CD8-positive, alpha-beta T cell (primary cell): ENCODE measurements at regions of chr1 and their contacts with region 1.

Region 1: GRCh38 chr1:121558514-121558913 is 373.7 kb downstream of the SRGAP2C start:
- DNase-seq: no peak
- ATAC-seq: no peak
- H3K4me3 ChIP-seq: no peak overlapping the region
- H3K4me3 Mint-ChIP-seq: no peak overlapping the region
- H3K27ac ChIP-seq: no peak overlapping the region
- H3K27ac Mint-ChIP-seq: no peak overlapping the region
- H3K4me1 ChIP-seq: peaks cover 4% of the 10 kb centered on the region
- H3K4me1 Mint-ChIP-seq: peaks cover 27% of the 10 kb centered on the region
- H3K27me3 ChIP-seq: no peaks in the 10 kb centered on the region
- H3K27me3 Mint-ChIP-seq: no peaks in the 10 kb centered on the region
- CTCF ChIP-seq: no peak

Region 2: GRCh38 chr1:121458291-121459048 is 100.0 kb before region 1 on chr1:
- CTCF ChIA-PET with region 1: no interaction called
- POLR2A ChIA-PET with region 1: no interaction called
- intact Hi-C with region 1: loop called (anchors 10 kb)
- DNase-seq: peak in 2 of 9 experiments; percentile 43 to 66
- ATAC-seq: peak; percentile 58
- H3K4me3 ChIP-seq: peak overlapping the region; percentile 16 to 30
- H3K4me3 Mint-ChIP-seq: peak overlapping the region; percentile 76
- H3K27ac ChIP-seq: no peak overlapping the region
- H3K27ac Mint-ChIP-seq: peak overlapping the region; percentile 77
- H3K4me1 ChIP-seq: peaks cover 5% of the 10 kb centered on the region
- H3K4me1 Mint-ChIP-seq: peaks cover 10% of the 10 kb centered on the region
- H3K27me3 ChIP-seq: no peaks in the 10 kb centered on the region
- H3K27me3 Mint-ChIP-seq: no peaks in the 10 kb centered on the region
- CTCF ChIP-seq: no peak

Region 3: GRCh38 chr1:121595089-121595488 is 36.6 kb after region 1 on chr1:
- CTCF ChIA-PET with region 1: no interaction called
- POLR2A ChIA-PET with region 1: no interaction called
- intact Hi-C with region 1: loop called in 1 of 2 experiments (anchors 5 kb)
- DNase-seq: no peak
- ATAC-seq: no peak
- H3K4me3 ChIP-seq: no peak overlapping the region
- H3K4me3 Mint-ChIP-seq: no peak overlapping the region
- H3K27ac ChIP-seq: no peak overlapping the region
- H3K27ac Mint-ChIP-seq: peak overlapping the region; percentile 73
- H3K4me1 ChIP-seq: no peaks in the 10 kb centered on the region
- H3K4me1 Mint-ChIP-seq: peaks cover 19% of the 10 kb centered on the region
- H3K27me3 ChIP-seq: no peaks in the 10 kb centered on the region
- H3K27me3 Mint-ChIP-seq: no peaks in the 10 kb centered on the region
- CTCF ChIP-seq: no peak